Endothelial cell of umbilical vein (primary cell): ENCODE measurements at regions of chr2 and their contacts with region 1.

Region 1: GRCh38 chr2:231662028-231662810 is 46.1 kb upstream of the PTMA start:
- DNase-seq: peak; percentile 97
- H3K4me3 ChIP-seq: peak overlapping the region in 2 of 3 experiments; percentile 25 to 32
- H3K27ac ChIP-seq: peak overlapping the region; percentile 57
- H3K4me1 ChIP-seq: peaks cover 23% of the 10 kb centered on the region
- H3K27me3 ChIP-seq: no peaks in the 10 kb centered on the region
- CTCF ChIP-seq: no peak
- POLR2A ChIP-seq: peak; percentile 85

Region 2: GRCh38 chr2:231642631-231643494 is 19.4 kb before region 1 on chr2:
- CTCF ChIA-PET with region 1: interaction called, 3 read pairs
- POLR2A ChIA-PET with region 1: no interaction called
- dilution Hi-C with region 1: no loop called
- intact Hi-C with region 1: loop called (anchors 1 kb)
- DNase-seq: peak; percentile 94
- H3K4me3 ChIP-seq: peak overlapping the region in 2 of 3 experiments; percentile 6 to 19
- H3K27ac ChIP-seq: peak overlapping the region; percentile 77
- H3K4me1 ChIP-seq: peaks cover 16% of the 10 kb centered on the region
- H3K27me3 ChIP-seq: no peaks in the 10 kb centered on the region
- CTCF ChIP-seq: no peak
- POLR2A ChIP-seq: no peak

Region 3: GRCh38 chr2:231680992-231681853 is 19.0 kb after region 1 on chr2:
- CTCF ChIA-PET with region 1: interaction called, 22 read pairs
- POLR2A ChIA-PET with region 1: no interaction called
- dilution Hi-C with region 1: no loop called
- intact Hi-C with region 1: loop called (anchors 2 kb)
- DNase-seq: peak; percentile 67
- H3K4me3 ChIP-seq: peak overlapping the region in 2 of 3 experiments; percentile 40 to 43
- H3K27ac ChIP-seq: peak overlapping the region; percentile 66
- H3K4me1 ChIP-seq: peaks cover 4% of the 10 kb centered on the region
- H3K27me3 ChIP-seq: no peaks in the 10 kb centered on the region
- CTCF ChIP-seq: no peak
- POLR2A ChIP-seq: peak; percentile 78

Region 4: DNA sequence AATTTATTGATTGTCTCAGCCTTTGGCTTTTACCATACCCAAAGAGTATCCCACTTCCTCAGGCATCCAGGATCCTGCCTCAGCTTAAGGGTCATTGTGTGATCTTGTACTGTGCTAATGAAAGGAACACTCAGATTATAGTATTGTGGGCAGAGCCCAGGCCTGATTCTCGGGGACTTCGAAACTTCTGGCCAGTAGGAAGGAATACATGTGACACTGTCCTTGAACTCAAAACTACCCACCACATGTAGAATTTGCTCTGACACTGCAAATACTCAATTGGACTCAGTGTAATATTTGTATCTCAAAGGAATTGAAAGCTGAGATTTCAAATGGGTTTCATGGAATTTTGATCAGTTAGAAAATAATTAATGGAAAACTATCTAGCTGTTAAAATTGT is 315.2 kb after region 1 on chr2:
- CTCF ChIA-PET with region 1: no interaction called
- POLR2A ChIA-PET with region 1: no interaction called
- dilution Hi-C with region 1: no loop called
- intact Hi-C with region 1: no loop called
- DNase-seq: no peak
- H3K4me3 ChIP-seq: no peak overlapping the region
- H3K27ac ChIP-seq: no peak overlapping the region
- H3K4me1 ChIP-seq: no peaks in the 10 kb centered on the region
- H3K27me3 ChIP-seq: no peaks in the 10 kb centered on the region
- CTCF ChIP-seq: no peak
- POLR2A ChIP-seq: no peak

Region 5: GRCh38 chr2:232910376-232910775 is 1248.2 kb after region 1 on chr2:
- CTCF ChIA-PET with region 1: no interaction called
- POLR2A ChIA-PET with region 1: no interaction called
- dilution Hi-C with region 1: no loop called
- intact Hi-C with region 1: no loop called
- DNase-seq: no peak
- H3K4me3 ChIP-seq: no peak overlapping the region
- H3K27ac ChIP-seq: no peak overlapping the region
- H3K4me1 ChIP-seq: peaks cover 5% of the 10 kb centered on the region
- H3K27me3 ChIP-seq: no peaks in the 10 kb centered on the region
- CTCF ChIP-seq: no peak
- POLR2A ChIP-seq: no peak